GM12878 (cell line): ENCODE measurements at regions of chr10 and their contacts with region 1.

Region 1: GRCh38 chr10:112434988-112435619 is 11.6 kb downstream of the ZDHHC6 start:
- DNase-seq: no peak
- ATAC-seq: peak; percentile 63; the same call in 2 of the 3 replicates
- H3K4me3 ChIP-seq: no peak overlapping the region
- H3K27ac ChIP-seq: no peak overlapping the region
- H3K4me1 ChIP-seq: no peaks in the 10 kb centered on the region
- H3K27me3 ChIP-seq: no peaks in the 10 kb centered on the region
- CTCF ChIP-seq: peak in 2 of 3 experiments; percentile 6 to 37; a peak in 2 of 6 replicates
- EP300 ChIP-seq: no peak
- POLR2A ChIP-seq: no peak
- RAD21 ChIP-seq: peak; percentile 40

Region 2: DNA sequence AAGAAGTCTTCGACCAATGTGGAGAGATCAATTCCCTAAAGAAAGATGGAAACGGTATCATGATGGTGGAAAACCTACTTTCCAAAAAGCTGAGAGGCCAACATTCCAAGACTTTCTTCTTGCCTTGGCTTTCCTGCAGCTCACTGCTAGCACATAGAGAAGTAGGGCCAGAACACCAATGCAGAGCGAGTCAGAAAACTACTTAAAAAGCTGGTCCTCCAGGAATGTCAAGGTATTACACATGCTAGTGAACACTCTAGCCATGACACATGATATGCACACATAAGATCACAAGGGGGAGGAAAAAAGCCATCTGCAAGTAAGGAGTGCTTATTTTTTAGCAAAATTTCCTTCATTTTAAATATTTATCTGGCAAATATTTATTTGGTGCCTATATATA is 274.3 kb before region 1 on chr10:
- CTCF ChIA-PET with region 1: no interaction called
- POLR2A ChIA-PET with region 1: no interaction called
- RAD21 ChIA-PET with region 1: no interaction called
- SMC1A ChIA-PET with region 1: no interaction called
- in situ Hi-C with region 1: no loop called
- intact Hi-C with region 1: loop called (anchors 10 kb)
- DNase-seq: no peak
- ATAC-seq: no peak
- H3K4me3 ChIP-seq: no peak overlapping the region
- H3K27ac ChIP-seq: no peak overlapping the region
- H3K4me1 ChIP-seq: no peaks in the 10 kb centered on the region
- H3K27me3 ChIP-seq: no peaks in the 10 kb centered on the region
- CTCF ChIP-seq: no peak
- EP300 ChIP-seq: no peak
- POLR2A ChIP-seq: no peak
- RAD21 ChIP-seq: no peak

Region 3: GRCh38 chr10:112307358-112308124 is 127.6 kb before region 1 on chr10:
- CTCF ChIA-PET with region 1: interaction called, 12 read pairs
- POLR2A ChIA-PET with region 1: no interaction called
- RAD21 ChIA-PET with region 1: no interaction called
- SMC1A ChIA-PET with region 1: interaction called, 3 read pairs
- in situ Hi-C with region 1: no loop called
- intact Hi-C with region 1: no loop called
- DNase-seq: no peak
- ATAC-seq: peak; percentile 89
- H3K4me3 ChIP-seq: no peak overlapping the region
- H3K27ac ChIP-seq: no peak overlapping the region
- H3K4me1 ChIP-seq: no peaks in the 10 kb centered on the region
- H3K27me3 ChIP-seq: no peaks in the 10 kb centered on the region
- CTCF ChIP-seq: peak; percentile 75 to 84 (median 78)
- EP300 ChIP-seq: no peak
- POLR2A ChIP-seq: no peak
- RAD21 ChIP-seq: peak; percentile 68

Region 4: GRCh38 chr10:112314822-112315474 is 120.2 kb before region 1 on chr10:
- CTCF ChIA-PET with region 1: interaction called, 6 read pairs
- POLR2A ChIA-PET with region 1: no interaction called
- RAD21 ChIA-PET with region 1: interaction called, 8 read pairs
- SMC1A ChIA-PET with region 1: interaction called, 28 read pairs
- in situ Hi-C with region 1: no loop called
- intact Hi-C with region 1: loop called (anchors 2 kb)
- DNase-seq: no peak
- ATAC-seq: peak; percentile 98
- H3K4me3 ChIP-seq: no peak overlapping the region
- H3K27ac ChIP-seq: no peak overlapping the region
- H3K4me1 ChIP-seq: no peaks in the 10 kb centered on the region
- H3K27me3 ChIP-seq: no peaks in the 10 kb centered on the region; a peak in 2 of 4 replicates
- CTCF ChIP-seq: peak; percentile 81 to 88 (median 82)
- EP300 ChIP-seq: no peak
- POLR2A ChIP-seq: no peak
- RAD21 ChIP-seq: peak; percentile 80

Region 5: DNA sequence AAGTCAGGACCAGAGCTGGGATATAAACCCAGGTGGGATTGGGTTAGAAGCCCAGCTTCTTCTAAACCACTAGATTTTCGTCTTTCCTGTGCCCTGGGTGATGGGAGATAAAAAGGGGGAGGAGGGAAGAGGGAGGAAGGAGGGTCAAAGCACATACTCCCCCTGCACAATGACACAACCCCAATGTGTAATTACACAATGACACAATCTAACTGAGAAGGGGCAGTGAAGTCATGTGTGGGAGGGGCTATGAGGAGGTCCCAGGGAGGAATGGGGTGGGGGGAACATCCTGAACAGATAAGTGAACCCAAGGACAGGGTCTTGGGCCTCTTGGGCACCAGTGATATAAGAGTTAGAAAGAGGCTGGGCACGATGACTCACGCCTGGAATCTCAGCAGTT is 107.4 kb before region 1 on chr10:
- CTCF ChIA-PET with region 1: interaction called, 6 read pairs
- POLR2A ChIA-PET with region 1: no interaction called
- RAD21 ChIA-PET with region 1: interaction called, 24 read pairs
- SMC1A ChIA-PET with region 1: interaction called, 18 read pairs
- in situ Hi-C with region 1: no loop called
- intact Hi-C with region 1: no loop called
- DNase-seq: no peak
- ATAC-seq: no peak
- H3K4me3 ChIP-seq: no peak overlapping the region
- H3K27ac ChIP-seq: no peak overlapping the region
- H3K4me1 ChIP-seq: no peaks in the 10 kb centered on the region
- H3K27me3 ChIP-seq: no peaks in the 10 kb centered on the region
- CTCF ChIP-seq: no peak
- EP300 ChIP-seq: no peak
- POLR2A ChIP-seq: no peak
- RAD21 ChIP-seq: no peak

Region 6: DNA sequence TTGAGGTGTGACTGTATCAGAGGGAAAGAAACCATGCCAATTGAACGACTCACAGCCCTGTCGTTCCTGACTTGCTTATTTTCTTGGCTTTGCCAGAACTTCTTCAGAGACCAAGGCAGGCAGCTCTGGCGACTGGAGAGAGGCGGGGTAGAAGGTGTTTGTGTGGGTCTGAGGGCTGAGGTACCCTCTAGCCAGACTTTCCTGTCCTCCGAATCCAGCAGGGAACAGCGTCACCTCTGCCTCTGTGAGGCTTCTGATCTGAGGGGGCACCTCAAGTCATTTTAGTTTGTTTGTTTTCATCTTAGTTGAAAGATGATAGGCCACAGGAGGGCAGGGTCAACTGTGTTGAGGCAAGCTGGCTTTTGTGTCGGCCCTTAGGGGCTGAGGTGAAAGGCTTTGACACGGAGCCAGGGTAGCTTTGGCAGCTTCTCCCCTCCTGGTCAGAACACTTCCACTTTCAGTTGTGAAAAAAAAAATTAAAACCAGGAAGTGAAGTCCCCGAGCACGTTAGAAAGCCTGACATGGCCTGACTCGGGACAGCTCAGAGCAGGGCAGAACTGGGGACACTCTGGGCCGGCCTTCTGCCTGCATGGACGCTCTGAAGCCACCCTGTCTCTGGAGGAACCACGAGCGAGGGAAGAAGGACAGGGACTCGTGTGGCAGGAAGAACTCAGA is 59.2 kb before region 1 on chr10:
- CTCF ChIA-PET with region 1: interaction called, 24 read pairs
- POLR2A ChIA-PET with region 1: no interaction called
- RAD21 ChIA-PET with region 1: interaction called, 17 read pairs
- SMC1A ChIA-PET with region 1: interaction called, 8 read pairs
- in situ Hi-C with region 1: no loop called
- intact Hi-C with region 1: no loop called
- DNase-seq: peak; percentile 48
- ATAC-seq: peak; percentile 87
- H3K4me3 ChIP-seq: peak overlapping the region; percentile 99
- H3K27ac ChIP-seq: peak overlapping the region; percentile 95
- H3K4me1 ChIP-seq: peaks cover 9% of the 10 kb centered on the region
- H3K27me3 ChIP-seq: no peaks in the 10 kb centered on the region
- CTCF ChIP-seq: no peak
- EP300 ChIP-seq: no peak
- POLR2A ChIP-seq: peak; percentile 90
- RAD21 ChIP-seq: no peak

Region 7: GRCh38 chr10:112461029-112461887 is 26.2 kb after region 1 on chr10:
- CTCF ChIA-PET with region 1: interaction called, 10 read pairs
- POLR2A ChIA-PET with region 1: no interaction called
- RAD21 ChIA-PET with region 1: no interaction called
- SMC1A ChIA-PET with region 1: no interaction called
- in situ Hi-C with region 1: no loop called
- intact Hi-C with region 1: no loop called
- DNase-seq: no peak
- ATAC-seq: no peak
- H3K4me3 ChIP-seq: no peak overlapping the region
- H3K27ac ChIP-seq: no peak overlapping the region; the same call in 1 of the 2 replicates
- H3K4me1 ChIP-seq: no peaks in the 10 kb centered on the region
- H3K27me3 ChIP-seq: no peaks in the 10 kb centered on the region
- CTCF ChIP-seq: no peak
- EP300 ChIP-seq: no peak
- POLR2A ChIP-seq: no peak
- RAD21 ChIP-seq: no peak